Calu3 (cell line): ENCODE measurements at regions of chrX and their contacts with region 1.

Region 1: DNA sequence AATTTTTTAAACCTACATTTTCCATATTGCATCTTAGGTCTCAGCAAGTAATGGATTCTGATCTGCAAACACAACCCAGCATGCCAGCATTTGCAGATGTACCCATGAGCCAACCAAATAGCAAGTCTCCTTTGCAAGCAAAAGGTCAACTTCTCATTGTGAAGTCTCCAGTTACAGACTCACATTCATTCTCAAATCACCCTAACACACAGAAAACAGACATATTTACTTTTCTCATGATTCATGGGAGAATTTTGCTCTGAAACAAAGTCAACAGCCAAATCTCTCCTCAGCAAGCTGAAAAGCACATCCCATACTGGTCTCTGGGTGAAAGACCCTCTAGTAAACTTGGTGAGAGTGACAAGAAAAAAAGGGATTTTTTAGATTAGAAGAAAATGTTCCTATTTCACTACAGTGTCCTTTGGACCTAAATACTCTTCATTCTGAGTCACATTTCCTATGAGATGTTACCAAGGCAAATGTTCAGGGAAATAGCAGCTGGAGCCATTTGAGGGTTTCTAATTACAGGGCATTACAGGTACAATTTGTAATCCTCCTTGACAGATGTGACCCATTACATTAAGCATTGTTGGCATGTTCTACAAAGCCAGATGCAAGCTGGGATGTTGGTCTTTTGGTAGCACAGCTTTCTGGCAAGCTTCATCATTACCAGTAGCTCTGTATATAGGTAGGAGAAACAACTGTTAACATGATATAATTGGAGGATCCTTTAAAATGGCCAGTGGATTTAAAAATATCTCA is 383.3 kb downstream of the SMARCA1 start:
- DNase-seq: no peak
- H3K4me3 Mint-ChIP-seq: no peak overlapping the region
- H3K27ac Mint-ChIP-seq: peak overlapping the region; percentile 66
- H3K4me1 Mint-ChIP-seq: peaks cover 53% of the 10 kb centered on the region
- H3K27me3 Mint-ChIP-seq: no peaks in the 10 kb centered on the region
- CTCF ChIP-seq: no peak

Region 2: GRCh38 chrX:128929271-128930057 is 210.6 kb before region 1 on chrX:
- CTCF ChIA-PET with region 1: no interaction called
- intact Hi-C with region 1: no loop called
- DNase-seq: no peak
- H3K4me3 Mint-ChIP-seq: no peak overlapping the region
- H3K27ac Mint-ChIP-seq: no peak overlapping the region
- H3K4me1 Mint-ChIP-seq: no peaks in the 10 kb centered on the region
- H3K27me3 Mint-ChIP-seq: no peaks in the 10 kb centered on the region
- CTCF ChIP-seq: no peak

Region 3: GRCh38 chrX:129039180-129039579 is 100.8 kb before region 1 on chrX:
- CTCF ChIA-PET with region 1: no interaction called
- intact Hi-C with region 1: loop called (anchors 10 kb)
- DNase-seq: no peak
- H3K4me3 Mint-ChIP-seq: no peak overlapping the region
- H3K27ac Mint-ChIP-seq: no peak overlapping the region
- H3K4me1 Mint-ChIP-seq: peaks cover 11% of the 10 kb centered on the region
- H3K27me3 Mint-ChIP-seq: no peaks in the 10 kb centered on the region
- CTCF ChIP-seq: no peak

Region 4: DNA sequence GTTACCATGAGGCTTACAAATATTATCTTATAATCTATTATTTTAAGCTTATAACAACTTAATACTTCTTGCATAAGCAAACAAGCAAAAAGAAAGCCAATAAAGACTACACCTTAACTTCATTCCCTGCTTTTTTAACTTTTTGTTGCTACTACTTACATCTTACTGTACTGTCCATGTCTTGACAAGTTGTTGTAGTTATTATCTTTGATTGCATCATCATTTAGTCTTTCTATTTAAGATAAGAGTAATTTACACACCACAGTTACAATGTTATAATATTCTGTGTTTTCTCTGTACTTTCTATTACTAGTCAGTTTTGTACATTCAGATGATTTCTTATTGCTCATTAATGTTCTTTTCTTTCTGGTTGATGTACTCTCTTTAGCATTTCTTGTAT is 36.7 kb after region 1 on chrX:
- CTCF ChIA-PET with region 1: no interaction called
- intact Hi-C with region 1: no loop called
- DNase-seq: no peak
- H3K4me3 Mint-ChIP-seq: no peak overlapping the region
- H3K27ac Mint-ChIP-seq: no peak overlapping the region
- H3K4me1 Mint-ChIP-seq: no peaks in the 10 kb centered on the region
- H3K27me3 Mint-ChIP-seq: no peaks in the 10 kb centered on the region
- CTCF ChIP-seq: no peak